ENCODE measurements at regions of chr6 and their contacts with region 1.

Region 1: GRCh38 chr6:72411872-72412708 is 209.8 kb upstream of the KCNQ5 start:
- DNase-seq: peak; percentile 49 to 80 (median 71)
- H3K4me3 ChIP-seq: no peak overlapping the region
- H3K4me3 Mint-ChIP-seq: no peak overlapping the region
- H3K27ac ChIP-seq: no peak overlapping the region
- H3K27ac Mint-ChIP-seq: peak overlapping the region in 1 of 8 donors; percentile 64
- H3K4me1 ChIP-seq: no peaks in the 10 kb centered on the region
- H3K4me1 Mint-ChIP-seq: peaks cover 0 to 2% (median 0%) of the 10 kb centered on the region in 3 donors
- H3K27me3 ChIP-seq: no peaks in the 10 kb centered on the region
- H3K27me3 Mint-ChIP-seq: peaks cover 15 to 24% of the 10 kb centered on the region in 2 donors

Region 2: GRCh38 chr6:71886184-71887005 is 525.7 kb before region 1 on chr6 and contains the start of gene RIMS1:
- CTCF ChIA-PET with region 1: no interaction called
- POLR2A ChIA-PET with region 1: no interaction called
- DNase-seq: no peak
- H3K4me3 ChIP-seq: no peak within 1 kb of the TSS
- H3K4me3 Mint-ChIP-seq: peak within 1 kb of the TSS in 2 of 7 donors; percentile 71 to 78
- H3K27ac ChIP-seq: no peak within 1 kb of the TSS
- H3K27ac Mint-ChIP-seq: peak within 1 kb of the TSS in 1 of 8 donors; percentile 49
- H3K4me1 ChIP-seq: no peaks in the 10 kb centered on the region
- H3K4me1 Mint-ChIP-seq: peaks cover 3 to 7% (median 3%) of the 10 kb centered on the region in 3 donors
- H3K27me3 ChIP-seq: no peaks in the 10 kb centered on the region
- H3K27me3 Mint-ChIP-seq: peaks cover 25 to 29% of the 10 kb centered on the region in 2 donors
- total RNA-seq, gene RIMS1: not detected

Region 3: DNA sequence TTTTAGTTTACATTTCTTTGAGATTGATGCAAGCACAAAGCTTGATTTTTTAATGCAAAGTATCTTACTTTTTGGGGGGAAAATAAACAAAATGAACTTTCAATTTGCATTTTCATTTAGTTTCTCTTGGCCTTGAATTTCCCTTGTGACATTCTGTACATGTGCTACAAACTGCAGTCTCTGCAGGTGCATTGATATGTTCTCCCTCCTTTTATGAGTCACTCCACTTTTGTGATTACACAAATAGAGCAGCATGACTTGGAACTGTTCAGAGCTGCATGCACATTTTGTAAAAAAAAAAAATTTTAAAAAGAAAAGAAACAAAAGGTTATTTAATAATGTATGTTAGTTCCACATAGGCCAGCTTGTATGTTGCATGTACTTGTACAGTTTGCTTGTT is 10.2 kb before region 1 on chr6:
- CTCF ChIA-PET with region 1: interaction called, 11 read pairs
- POLR2A ChIA-PET with region 1: no interaction called
- DNase-seq: no peak
- H3K4me3 ChIP-seq: no peak overlapping the region
- H3K4me3 Mint-ChIP-seq: no peak overlapping the region
- H3K27ac ChIP-seq: no peak overlapping the region
- H3K27ac Mint-ChIP-seq: no peak overlapping the region
- H3K4me1 ChIP-seq: no peaks in the 10 kb centered on the region
- H3K4me1 Mint-ChIP-seq: no peaks in the 10 kb centered on the region
- H3K27me3 ChIP-seq: no peaks in the 10 kb centered on the region
- H3K27me3 Mint-ChIP-seq: peaks cover 1 to 6% of the 10 kb centered on the region in 2 donors

Region 4: GRCh38 chr6:72425003-72425681 is 13.1 kb after region 1 on chr6:
- CTCF ChIA-PET with region 1: interaction called, 16 read pairs
- POLR2A ChIA-PET with region 1: no interaction called
- DNase-seq: no peak
- H3K4me3 ChIP-seq: no peak overlapping the region
- H3K4me3 Mint-ChIP-seq: no peak overlapping the region
- H3K27ac ChIP-seq: no peak overlapping the region
- H3K27ac Mint-ChIP-seq: no peak overlapping the region
- H3K4me1 ChIP-seq: no peaks in the 10 kb centered on the region
- H3K4me1 Mint-ChIP-seq: no peaks in the 10 kb centered on the region
- H3K27me3 ChIP-seq: no peaks in the 10 kb centered on the region
- H3K27me3 Mint-ChIP-seq: peaks cover 2 to 6% of the 10 kb centered on the region in 2 donors

Region 5: DNA sequence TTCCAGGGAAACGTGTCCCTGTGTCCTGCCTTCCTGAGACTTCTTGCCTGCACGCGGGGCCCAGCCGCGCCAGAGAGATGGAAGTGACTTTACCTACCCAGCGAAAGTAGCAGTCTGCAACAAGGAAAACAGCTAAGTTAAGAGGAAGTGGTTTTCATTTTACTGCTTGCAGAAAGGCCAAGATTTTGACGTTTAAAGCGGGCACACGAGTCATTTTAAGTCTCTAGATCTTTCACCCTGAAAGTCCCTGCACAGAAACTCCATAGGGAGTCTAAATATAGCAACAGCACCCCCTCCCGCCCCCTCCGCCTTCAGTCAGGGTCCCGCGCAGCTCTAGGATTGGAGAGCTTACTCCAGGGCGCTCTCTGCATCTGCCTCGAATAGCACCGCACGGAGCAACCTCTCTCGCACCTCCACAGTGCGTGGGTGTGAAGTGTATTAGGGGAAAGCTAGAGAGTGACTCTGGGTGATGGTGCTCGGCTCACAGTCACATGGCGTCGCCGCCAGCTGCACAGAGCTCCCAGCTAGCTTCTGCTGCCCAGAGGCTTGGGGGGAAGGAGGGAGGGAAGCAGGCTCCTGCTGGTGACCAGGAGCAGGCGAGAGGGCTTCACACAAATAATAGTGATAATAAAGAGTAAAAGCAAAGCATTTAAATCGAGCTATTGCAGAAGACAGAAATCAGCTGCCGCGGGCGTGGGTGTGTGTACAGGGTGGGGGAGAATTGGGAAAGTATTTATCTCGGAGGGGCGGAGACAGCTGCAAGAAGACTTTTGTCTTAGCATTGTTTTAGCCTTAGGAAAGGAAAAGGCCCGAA is 208.0 kb after region 1 on chr6:
- CTCF ChIA-PET with region 1: interaction called, 16 read pairs
- POLR2A ChIA-PET with region 1: no interaction called
- DNase-seq: peak; percentile 34 to 73 (median 58)
- H3K4me3 ChIP-seq: peak overlapping the region; percentile 74
- H3K4me3 Mint-ChIP-seq: peak overlapping the region; percentile 90 to 97 (median 93)
- H3K27ac ChIP-seq: peak overlapping the region; percentile 2
- H3K27ac Mint-ChIP-seq: peak overlapping the region; percentile 70 to 95 (median 92)
- H3K4me1 ChIP-seq: peaks cover 22% of the 10 kb centered on the region
- H3K4me1 Mint-ChIP-seq: peaks cover 35 to 64% (median 57%) of the 10 kb centered on the region in 3 donors
- H3K27me3 ChIP-seq: no peaks in the 10 kb centered on the region
- H3K27me3 Mint-ChIP-seq: no peaks in the 10 kb centered on the region

Region 6: GRCh38 chr6:73129653-73130443 is 717.8 kb after region 1 on chr6:
- CTCF ChIA-PET with region 1: interaction called, 90 read pairs
- POLR2A ChIA-PET with region 1: no interaction called
- DNase-seq: peak; percentile 62 to 80 (median 67)
- H3K4me3 ChIP-seq: no peak overlapping the region
- H3K4me3 Mint-ChIP-seq: peak overlapping the region in 4 of 7 donors; percentile 9 to 63 (median 41)
- H3K27ac ChIP-seq: no peak overlapping the region
- H3K27ac Mint-ChIP-seq: no peak overlapping the region
- H3K4me1 ChIP-seq: no peaks in the 10 kb centered on the region
- H3K4me1 Mint-ChIP-seq: peaks cover 2 to 10% (median 6%) of the 10 kb centered on the region in 3 donors
- H3K27me3 ChIP-seq: no peaks in the 10 kb centered on the region
- H3K27me3 Mint-ChIP-seq: no peaks in the 10 kb centered on the region

Region 7: DNA sequence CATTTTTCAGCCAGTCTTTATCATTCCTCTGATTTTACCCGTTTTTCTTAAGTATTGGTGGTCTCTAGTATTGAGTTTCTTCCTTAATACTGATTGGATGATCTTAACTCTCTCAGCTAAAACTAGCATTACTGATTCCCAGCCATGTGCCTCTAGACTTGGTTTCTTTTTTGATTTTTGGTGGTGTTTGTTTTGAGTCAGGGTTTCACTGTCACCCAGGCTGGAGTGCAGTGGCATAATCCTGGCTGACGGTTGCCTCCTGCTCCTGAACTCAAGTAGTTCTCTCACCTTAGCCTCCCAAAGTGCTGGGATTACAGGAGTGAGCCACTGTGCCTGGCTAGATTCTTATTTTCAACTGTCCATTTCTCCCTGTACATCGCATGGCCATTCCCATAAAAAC is 917.1 kb after region 1 on chr6:
- CTCF ChIA-PET with region 1: interaction called, 11 read pairs
- POLR2A ChIA-PET with region 1: no interaction called
- DNase-seq: no peak
- H3K4me3 ChIP-seq: no peak overlapping the region
- H3K4me3 Mint-ChIP-seq: no peak overlapping the region
- H3K27ac ChIP-seq: no peak overlapping the region
- H3K27ac Mint-ChIP-seq: peak overlapping the region in 1 of 8 donors; percentile 3
- H3K4me1 ChIP-seq: no peaks in the 10 kb centered on the region
- H3K4me1 Mint-ChIP-seq: no peaks in the 10 kb centered on the region
- H3K27me3 ChIP-seq: no peaks in the 10 kb centered on the region
- H3K27me3 Mint-ChIP-seq: peaks cover 5 to 34% of the 10 kb centered on the region in 2 donors

Measured in CD8-positive, alpha-beta memory T cell (primary cell).